ENCODE measurements at regions of chr14 and their contacts with region 1.

Region 1: DNA sequence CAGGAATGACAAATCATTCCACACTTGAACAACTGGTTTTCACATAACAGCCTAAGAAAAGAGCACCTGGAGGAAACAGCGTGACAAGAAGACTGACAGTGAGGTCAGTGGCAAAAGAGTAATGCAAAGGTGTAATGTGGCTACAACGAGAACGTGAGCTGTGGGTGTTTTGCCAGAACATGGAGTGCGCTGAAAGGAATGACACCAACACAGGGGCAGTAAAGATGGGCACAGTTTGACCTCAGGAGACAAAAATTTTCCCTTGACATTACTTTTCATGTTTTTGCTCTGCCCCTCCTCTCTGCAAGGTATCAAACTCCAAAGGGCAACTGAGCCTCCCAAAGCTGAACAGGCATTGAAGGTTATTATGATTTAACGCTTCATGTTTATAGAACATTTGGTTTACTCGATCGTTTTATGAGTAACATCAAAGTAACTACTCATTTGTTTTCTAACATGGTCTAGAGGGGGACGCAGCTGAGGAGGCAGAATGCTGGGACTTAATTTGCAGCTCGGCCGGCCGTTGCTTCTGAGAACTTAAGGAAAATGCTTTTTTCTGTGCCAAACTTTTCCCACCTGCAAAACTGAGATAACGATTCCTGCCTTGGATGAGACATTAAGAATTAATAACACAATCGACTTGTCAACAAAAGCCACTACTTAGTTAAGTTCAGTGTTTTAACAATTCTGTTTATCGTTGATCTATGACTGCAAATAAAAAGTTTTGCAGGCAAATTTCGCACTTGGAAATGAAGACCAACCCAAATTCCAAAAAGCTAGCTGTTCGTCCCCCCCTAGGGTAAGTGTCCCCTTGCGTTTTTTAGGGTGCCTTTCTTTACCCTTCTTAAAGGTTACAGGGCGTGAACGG is 954 bp downstream of the HAUS4 start:
- DNase-seq: no peak
- ATAC-seq: no peak
- H3K4me3 ChIP-seq: peak overlapping the region; percentile 85
- H3K27ac ChIP-seq: peak overlapping the region; percentile 90
- H3K4me1 ChIP-seq: no peaks in the 10 kb centered on the region
- H3K27me3 ChIP-seq: no peaks in the 10 kb centered on the region
- CTCF ChIP-seq: no peak
- EP300 ChIP-seq: no peak
- POLR2A ChIP-seq: no peak
- RAD21 ChIP-seq: no peak

Region 2: DNA sequence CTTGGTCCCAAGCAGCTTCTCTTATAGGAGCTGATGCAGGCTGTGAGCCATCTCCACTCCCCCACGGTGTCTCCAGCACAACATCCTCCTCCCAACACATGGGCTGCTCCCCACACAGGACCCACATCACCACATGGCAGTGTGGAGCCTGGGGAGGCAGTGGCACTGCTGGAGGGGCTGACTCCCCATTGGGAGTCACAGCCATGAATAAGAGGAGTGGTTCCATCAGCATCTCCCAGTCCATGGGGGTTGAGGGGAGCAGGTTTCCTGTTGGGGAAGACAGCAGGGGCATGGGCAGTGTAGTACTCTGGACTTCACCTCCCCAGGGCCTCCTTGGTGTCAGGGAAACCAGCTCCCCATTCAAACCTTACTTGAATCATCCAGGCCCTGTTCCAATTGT is 229.9 kb before region 1 on chr14:
- CTCF ChIA-PET with region 1: no interaction called
- POLR2A ChIA-PET with region 1: no interaction called
- RAD21 ChIA-PET with region 1: no interaction called
- SMC1A ChIA-PET with region 1: no interaction called
- in situ Hi-C with region 1: no loop called
- intact Hi-C with region 1: no loop called
- DNase-seq: no peak
- ATAC-seq: no peak
- H3K4me3 ChIP-seq: no peak overlapping the region
- H3K27ac ChIP-seq: no peak overlapping the region
- H3K4me1 ChIP-seq: no peaks in the 10 kb centered on the region; the same call in 1 of the 2 replicates
- H3K27me3 ChIP-seq: no peaks in the 10 kb centered on the region
- CTCF ChIP-seq: no peak
- EP300 ChIP-seq: no peak
- POLR2A ChIP-seq: no peak
- RAD21 ChIP-seq: no peak

Region 3: DNA sequence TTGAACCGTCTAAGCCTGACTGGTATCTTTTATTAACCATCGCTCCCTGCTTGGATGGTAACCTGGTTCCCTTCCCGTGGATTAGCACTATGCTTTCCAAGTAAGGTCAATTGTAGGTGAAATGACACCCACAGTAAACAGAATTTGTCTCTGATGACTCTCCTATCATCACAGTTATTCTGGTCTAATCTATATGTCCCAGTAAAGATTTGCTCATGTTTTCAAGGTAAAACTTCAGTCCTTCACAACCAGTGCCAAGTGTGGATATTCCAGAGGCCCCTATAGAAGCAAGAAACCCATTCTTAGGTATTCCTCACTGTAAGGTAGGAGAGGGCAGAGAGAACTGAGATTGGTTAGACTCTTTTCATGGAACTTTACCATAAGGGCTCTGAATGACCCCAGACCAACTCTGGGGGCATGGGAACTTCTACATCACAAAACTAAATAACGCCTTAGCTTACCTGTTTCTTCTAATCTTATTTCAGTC is 10.9 kb after region 1 on chr14:
- CTCF ChIA-PET with region 1: interaction called, 56 read pairs
- POLR2A ChIA-PET with region 1: interaction called, 5 read pairs
- RAD21 ChIA-PET with region 1: interaction called, 4 read pairs
- SMC1A ChIA-PET with region 1: interaction called, 7 read pairs
- in situ Hi-C with region 1: no loop called
- intact Hi-C with region 1: no loop called
- DNase-seq: no peak
- ATAC-seq: no peak
- H3K4me3 ChIP-seq: no peak overlapping the region
- H3K27ac ChIP-seq: no peak overlapping the region
- H3K4me1 ChIP-seq: no peaks in the 10 kb centered on the region
- H3K27me3 ChIP-seq: no peaks in the 10 kb centered on the region
- CTCF ChIP-seq: no peak
- EP300 ChIP-seq: no peak
- POLR2A ChIP-seq: no peak
- RAD21 ChIP-seq: no peak

Region 4: DNA sequence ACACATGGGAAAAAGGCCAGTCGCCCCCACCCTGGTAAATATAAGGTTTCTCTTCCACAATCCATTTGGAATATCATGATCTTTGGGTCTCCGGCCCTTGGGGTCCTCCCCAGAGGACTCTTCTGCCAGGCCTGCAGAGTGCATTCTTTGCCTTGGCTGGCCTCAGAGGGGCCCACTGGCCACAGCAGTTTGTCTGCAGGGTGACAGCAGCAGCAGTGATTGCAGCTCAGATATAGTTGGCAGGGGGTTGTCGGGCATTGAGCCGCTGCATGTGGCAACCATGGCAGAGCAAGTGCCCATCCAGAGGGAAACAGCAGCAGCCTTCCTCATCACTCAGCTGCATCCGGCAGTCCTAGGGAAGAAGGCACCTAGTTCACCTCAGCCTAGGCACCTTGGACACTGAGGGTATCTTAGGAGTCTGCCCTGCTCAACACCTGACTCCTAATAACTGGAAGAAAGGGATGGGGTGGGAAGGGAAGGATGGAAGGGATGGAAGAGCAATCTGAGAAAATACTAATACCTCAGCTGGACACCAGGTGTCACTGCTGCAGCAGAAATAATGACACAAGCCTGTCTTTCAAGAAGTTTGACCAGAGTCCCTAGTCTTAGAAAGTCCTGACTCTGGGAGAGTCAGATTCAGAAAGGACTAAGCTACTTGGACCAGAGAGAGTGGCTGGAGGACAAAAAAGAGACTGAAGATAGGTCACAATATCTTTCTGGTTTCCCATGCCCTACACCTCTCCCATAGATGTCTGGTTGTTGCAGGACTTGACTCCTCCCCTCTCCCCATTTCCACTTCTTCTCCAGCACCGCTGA is 17.5 kb after region 1 on chr14:
- CTCF ChIA-PET with region 1: interaction called, 56 read pairs
- POLR2A ChIA-PET with region 1: interaction called, 5 read pairs
- RAD21 ChIA-PET with region 1: interaction called, 4 read pairs
- SMC1A ChIA-PET with region 1: interaction called, 13 read pairs
- in situ Hi-C with region 1: no loop called
- intact Hi-C with region 1: no loop called
- DNase-seq: no peak
- ATAC-seq: peak; percentile 85
- H3K4me3 ChIP-seq: no peak overlapping the region
- H3K27ac ChIP-seq: no peak overlapping the region
- H3K4me1 ChIP-seq: no peaks in the 10 kb centered on the region
- H3K27me3 ChIP-seq: no peaks in the 10 kb centered on the region
- CTCF ChIP-seq: peak; percentile 65 to 82 (median 70)
- EP300 ChIP-seq: no peak
- POLR2A ChIP-seq: no peak
- RAD21 ChIP-seq: peak; percentile 61

Region 5: GRCh38 chr14:23057757-23058653 is 102.1 kb after region 1 on chr14:
- CTCF ChIA-PET with region 1: interaction called, 9 read pairs
- POLR2A ChIA-PET with region 1: interaction called, 3 read pairs
- RAD21 ChIA-PET with region 1: interaction called, 6 read pairs
- SMC1A ChIA-PET with region 1: interaction called, 13 read pairs
- in situ Hi-C with region 1: no loop called
- intact Hi-C with region 1: no loop called
- DNase-seq: peak; percentile 40
- ATAC-seq: peak; percentile 82
- H3K4me3 ChIP-seq: peak overlapping the region; percentile 79
- H3K27ac ChIP-seq: no peak overlapping the region
- H3K4me1 ChIP-seq: peaks cover 12% of the 10 kb centered on the region
- H3K27me3 ChIP-seq: no peaks in the 10 kb centered on the region
- CTCF ChIP-seq: peak; percentile 92 to 97 (median 96); a peak in 5 of 6 replicates
- EP300 ChIP-seq: no peak
- POLR2A ChIP-seq: peak; percentile 74
- RAD21 ChIP-seq: peak; percentile 78